Heart right ventricle (tissue), 16 donors: ENCODE measurements at regions of chr1 and their contacts with region 1.

Region 1: DNA sequence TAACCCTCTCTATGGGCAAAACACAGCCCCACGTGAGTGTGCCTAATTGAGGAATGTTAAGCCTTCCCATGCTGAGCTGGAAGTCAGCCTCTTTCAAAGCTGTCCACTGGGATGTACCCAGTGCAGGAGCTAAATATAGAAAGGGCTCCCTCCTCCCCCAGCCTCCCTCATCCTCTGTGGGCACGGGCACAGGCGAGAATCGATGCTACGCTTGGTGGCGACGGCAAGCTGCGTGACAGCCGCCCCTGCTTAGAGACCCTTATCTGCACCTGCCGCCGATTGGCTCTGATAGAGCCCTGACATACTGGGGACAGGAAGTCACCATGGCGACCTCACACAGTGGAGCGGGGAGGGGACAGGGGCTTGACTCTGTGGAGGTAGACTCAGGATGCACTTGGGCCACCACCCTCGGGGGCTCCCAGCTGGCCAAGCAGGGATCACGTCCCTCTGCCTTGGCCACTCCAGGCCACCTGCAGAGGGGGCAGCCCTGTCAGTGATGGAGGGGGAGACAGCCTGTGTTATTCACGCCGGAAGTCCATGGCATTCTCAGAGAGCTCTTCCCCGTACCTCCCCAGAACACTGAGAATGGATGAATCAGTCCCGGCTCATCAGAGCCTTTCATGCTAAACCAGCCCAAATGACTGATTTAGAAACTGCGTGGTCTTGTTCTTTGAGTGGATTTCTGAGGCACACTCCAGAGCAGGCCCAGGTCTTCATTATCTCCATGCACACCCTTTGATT is 84.8 kb downstream of the KCND3 start:
- DNase-seq: peak; percentile 24 to 48
- ATAC-seq: peak; percentile 71 to 95 (median 90)
- H3K4me3 ChIP-seq: no peak overlapping the region
- H3K27ac ChIP-seq: peak overlapping the region in 7 of 10 donors; percentile 10 to 72 (median 49)
- H3K4me1 ChIP-seq: peaks cover 0 to 39% (median 19%) of the 10 kb centered on the region in 9 donors
- H3K27me3 ChIP-seq: peaks cover 0 to 5% (median 0%) of the 10 kb centered on the region in 7 donors
- CTCF ChIP-seq: peak in 1 of 9 donors; percentile 27

Region 2: DNA sequence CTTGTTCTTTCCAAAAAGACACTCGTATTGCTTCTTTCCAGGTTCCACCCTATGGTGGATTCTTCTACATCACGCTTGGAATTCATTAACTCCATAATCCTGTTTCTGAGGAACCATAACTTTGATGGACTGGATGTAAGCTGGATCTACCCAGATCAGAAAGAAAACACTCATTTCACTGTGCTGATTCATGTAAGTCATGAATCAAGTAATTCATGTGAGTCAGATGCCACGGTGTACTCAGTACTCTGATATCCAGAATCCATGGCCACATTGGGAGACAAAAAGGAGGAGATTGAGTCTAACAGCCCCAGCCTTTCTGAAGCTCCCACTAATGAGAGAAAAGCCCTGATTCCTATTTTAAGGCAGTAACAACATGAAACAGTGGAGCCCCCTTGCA is 669.8 kb before region 1 on chr1:
- intact Hi-C with region 1: no loop called
- DNase-seq: no peak
- ATAC-seq: peak in 1 of 8 donors; percentile 41
- H3K4me3 ChIP-seq: no peak overlapping the region
- H3K27ac ChIP-seq: no peak overlapping the region
- H3K4me1 ChIP-seq: peaks cover 0 to 7% (median 0%) of the 10 kb centered on the region in 9 donors
- H3K27me3 ChIP-seq: peaks cover 0 to 10% (median 0%) of the 10 kb centered on the region in 7 donors
- CTCF ChIP-seq: no peak

Region 3: GRCh38 chr1:111789666-111790316 is 114.9 kb before region 1 on chr1:
- intact Hi-C with region 1: loop called in 1 of 10 experiments (anchors 10 kb)
- DNase-seq: no peak
- ATAC-seq: peak in 4 of 8 donors; percentile 39 to 49 (median 43)
- H3K4me3 ChIP-seq: no peak overlapping the region
- H3K27ac ChIP-seq: no peak overlapping the region
- H3K4me1 ChIP-seq: peaks cover 0 to 16% (median 0%) of the 10 kb centered on the region in 9 donors
- H3K27me3 ChIP-seq: no peaks in the 10 kb centered on the region
- CTCF ChIP-seq: peak in 4 of 9 donors; percentile 30 to 40 (median 34)

Region 4: DNA sequence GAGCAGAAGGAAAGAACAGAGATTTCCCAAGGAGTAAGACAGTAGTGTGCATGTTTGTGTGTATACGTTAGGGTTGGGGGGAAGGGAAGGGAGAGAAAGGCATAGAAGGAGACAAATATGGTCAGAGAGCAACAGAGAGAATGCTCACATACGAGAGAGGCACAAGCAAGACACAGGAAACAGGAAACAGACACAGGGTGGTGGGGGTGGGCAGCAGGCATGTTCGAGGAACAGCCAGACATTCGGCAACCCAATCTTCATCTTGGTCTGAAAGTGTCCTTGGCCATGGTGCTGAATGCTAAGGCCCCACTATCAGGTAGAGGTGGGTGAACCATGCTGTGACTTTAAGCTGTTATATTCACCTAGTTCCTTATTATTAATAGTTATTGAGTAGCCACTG is 39.9 kb before region 1 on chr1:
- intact Hi-C with region 1: no loop called
- DNase-seq: no peak
- ATAC-seq: no peak
- H3K4me3 ChIP-seq: no peak overlapping the region
- H3K27ac ChIP-seq: no peak overlapping the region
- H3K4me1 ChIP-seq: peaks cover 0 to 7% (median 0%) of the 10 kb centered on the region in 9 donors
- H3K27me3 ChIP-seq: peaks cover 0 to 4% (median 0%) of the 10 kb centered on the region in 7 donors
- CTCF ChIP-seq: no peak

Region 5: GRCh38 chr1:111880881-111881837 is 23.5 kb before region 1 on chr1:
- intact Hi-C with region 1: no loop called
- DNase-seq: peak; percentile 41 to 52
- ATAC-seq: peak; percentile 40 to 74 (median 62)
- H3K4me3 ChIP-seq: no peak overlapping the region
- H3K27ac ChIP-seq: peak overlapping the region in 3 of 10 donors; percentile 8 to 41 (median 13)
- H3K4me1 ChIP-seq: peaks cover 7 to 66% (median 35%) of the 10 kb centered on the region in 9 donors
- H3K27me3 ChIP-seq: peaks cover 0 to 6% (median 0%) of the 10 kb centered on the region in 7 donors
- CTCF ChIP-seq: no peak

Region 6: GRCh38 chr1:111948209-111949171 is 43.8 kb after region 1 on chr1:
- intact Hi-C with region 1: loop called in 1 of 10 experiments (anchors 2 kb)
- DNase-seq: peak; percentile 61 to 72
- ATAC-seq: peak; percentile 51 to 94 (median 90)
- H3K4me3 ChIP-seq: no peak overlapping the region
- H3K27ac ChIP-seq: peak overlapping the region; percentile 0 to 79 (median 72)
- H3K4me1 ChIP-seq: peaks cover 0 to 53% (median 30%) of the 10 kb centered on the region in 9 donors
- H3K27me3 ChIP-seq: peaks cover 0 to 6% (median 0%) of the 10 kb centered on the region in 7 donors
- CTCF ChIP-seq: no peak

Region 7: DNA sequence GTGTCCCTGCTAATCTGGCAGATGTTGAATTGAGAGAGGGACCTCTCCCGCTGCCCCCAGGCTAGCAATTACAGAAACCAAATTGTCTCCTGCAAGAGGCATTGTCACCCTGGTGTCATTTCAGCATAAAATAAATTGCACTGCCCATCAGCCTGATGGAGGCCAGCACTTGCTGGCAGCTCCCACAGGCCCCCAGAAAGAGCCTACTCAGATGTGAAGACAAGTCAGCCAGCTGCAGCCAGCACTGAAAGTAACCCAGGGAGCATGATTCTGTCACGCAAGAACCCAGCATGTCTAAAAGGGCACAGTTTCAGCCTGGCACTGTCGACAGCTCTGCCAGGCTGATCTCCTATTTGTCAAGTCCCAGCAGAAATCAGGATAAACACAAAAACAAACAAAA is 381.1 kb after region 1 on chr1:
- intact Hi-C with region 1: no loop called
- DNase-seq: no peak
- ATAC-seq: no peak
- H3K4me3 ChIP-seq: no peak overlapping the region
- H3K27ac ChIP-seq: no peak overlapping the region
- H3K4me1 ChIP-seq: no peaks in the 10 kb centered on the region
- H3K27me3 ChIP-seq: peaks cover 0 to 9% (median 0%) of the 10 kb centered on the region in 7 donors
- CTCF ChIP-seq: no peak